Mammary epithelial cell (primary cell): ENCODE measurements at regions of chr12 and their contacts with region 1.

Region 1: GRCh38 chr12:75977952-75978671 is 53.5 kb downstream of the PHLDA1 start:
- DNase-seq: peak; percentile 99
- H3K4me3 ChIP-seq: no peak overlapping the region
- H3K27ac ChIP-seq: peak overlapping the region; percentile 96
- H3K4me1 ChIP-seq: peaks cover 37% of the 10 kb centered on the region
- H3K27me3 ChIP-seq: no peaks in the 10 kb centered on the region
- CTCF ChIP-seq: no peak

Region 2: GRCh38 chr12:75684678-75685601 is 293.2 kb before region 1 on chr12:
- CTCF ChIA-PET with region 1: interaction called, 4 read pairs
- dilution Hi-C with region 1: no loop called
- in situ Hi-C with region 1: no loop called
- intact Hi-C with region 1: loop called (anchors 1 kb)
- DNase-seq: peak; percentile 97
- H3K4me3 ChIP-seq: no peak overlapping the region
- H3K27ac ChIP-seq: peak overlapping the region; percentile 92
- H3K4me1 ChIP-seq: peaks cover 25% of the 10 kb centered on the region
- H3K27me3 ChIP-seq: no peaks in the 10 kb centered on the region
- CTCF ChIP-seq: no peak

Region 3: DNA sequence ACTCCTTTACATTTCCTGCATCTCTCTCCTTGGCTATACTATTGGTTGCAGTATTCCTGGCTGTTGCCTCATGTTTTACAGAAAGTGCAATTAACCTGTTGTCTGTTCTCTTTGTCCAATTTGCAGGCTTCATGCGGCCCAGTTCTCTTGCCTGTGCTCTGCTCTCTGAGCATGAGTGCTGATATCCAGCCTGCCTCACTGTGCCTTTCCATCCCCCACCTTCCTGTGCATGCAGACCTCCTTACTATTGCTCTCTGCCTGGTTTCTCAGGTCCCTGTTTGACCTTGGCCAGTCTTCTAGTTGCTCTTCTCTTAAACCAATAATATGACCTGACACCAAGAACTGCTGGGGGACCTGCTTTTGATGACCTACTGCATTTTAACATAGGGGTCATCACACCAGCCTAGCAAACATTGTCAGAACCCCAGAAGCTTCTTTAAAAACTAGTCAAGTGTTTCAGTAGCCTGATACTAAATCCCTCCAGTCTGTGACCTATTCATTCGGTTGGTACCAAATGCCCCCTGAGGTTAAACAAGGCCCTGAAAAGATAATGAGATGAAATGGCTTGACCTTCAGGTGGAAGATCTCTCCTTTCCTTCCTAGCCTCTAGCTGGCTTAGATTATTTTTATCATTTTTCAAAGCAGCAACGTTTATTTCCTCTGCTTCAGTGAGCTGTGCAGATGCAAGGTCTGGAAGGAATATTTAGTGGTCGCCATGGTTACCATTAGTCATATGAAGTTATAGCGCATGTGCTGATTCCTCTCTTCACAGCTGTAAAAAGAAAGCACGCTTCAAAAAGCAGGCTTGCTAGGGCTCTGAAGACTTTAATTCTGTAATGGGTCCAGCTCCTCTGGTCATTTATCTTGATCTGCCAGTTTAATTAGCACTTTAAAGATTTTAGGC is 163.0 kb before region 1 on chr12:
- CTCF ChIA-PET with region 1: no interaction called
- dilution Hi-C with region 1: no loop called
- in situ Hi-C with region 1: no loop called
- intact Hi-C with region 1: loop called (anchors 2 kb)
- DNase-seq: peak; percentile 66
- H3K4me3 ChIP-seq: no peak overlapping the region
- H3K27ac ChIP-seq: peak overlapping the region; percentile 60
- H3K4me1 ChIP-seq: peaks cover 23% of the 10 kb centered on the region
- H3K27me3 ChIP-seq: no peaks in the 10 kb centered on the region
- CTCF ChIP-seq: no peak

Region 4: GRCh38 chr12:75820848-75821578 is 157.1 kb before region 1 on chr12:
- CTCF ChIA-PET with region 1: no interaction called
- dilution Hi-C with region 1: no loop called
- in situ Hi-C with region 1: no loop called
- intact Hi-C with region 1: loop called (anchors 2 kb)
- DNase-seq: peak; percentile 79
- H3K4me3 ChIP-seq: no peak overlapping the region
- H3K27ac ChIP-seq: peak overlapping the region; percentile 44
- H3K4me1 ChIP-seq: peaks cover 52% of the 10 kb centered on the region
- H3K27me3 ChIP-seq: no peaks in the 10 kb centered on the region
- CTCF ChIP-seq: peak in 1 of 2 donors; percentile 40

Region 5: DNA sequence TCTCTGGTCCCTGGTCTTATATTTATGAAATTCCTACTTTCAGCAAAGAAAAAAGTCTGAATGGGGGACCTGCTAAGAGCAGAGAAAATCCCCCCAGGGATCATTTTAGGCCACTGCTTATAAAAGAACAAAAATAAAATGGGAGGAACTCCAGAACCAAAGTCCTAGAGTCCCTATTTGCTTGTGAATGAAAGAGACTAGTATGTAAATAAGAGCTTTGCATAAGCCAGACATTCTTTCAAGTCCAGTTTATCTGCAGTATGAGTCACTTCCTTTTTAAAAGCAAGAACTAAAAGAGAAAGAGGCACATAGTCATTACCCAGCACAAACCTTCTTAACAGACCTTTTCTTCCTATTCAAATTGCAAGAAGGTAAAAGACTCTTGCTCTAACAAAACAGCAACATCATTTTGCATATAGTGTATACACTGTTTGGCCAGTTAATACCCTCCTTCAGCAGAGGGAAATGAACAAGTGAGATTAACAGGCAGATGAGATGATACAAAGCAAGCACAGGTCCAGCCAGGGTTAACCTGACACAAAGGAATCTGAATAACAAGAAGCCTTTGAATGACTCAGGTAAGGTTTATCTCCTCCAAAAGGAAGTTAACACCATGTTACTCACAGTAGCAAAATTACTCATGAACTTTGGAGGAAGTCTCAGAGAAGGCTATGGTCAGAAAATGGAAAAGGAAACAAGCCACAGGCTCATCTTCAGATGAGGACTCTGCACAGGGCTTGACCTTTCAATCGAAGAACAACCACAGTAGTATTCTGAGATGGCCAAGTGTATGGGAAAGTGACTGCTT is 33.8 kb before region 1 on chr12:
- CTCF ChIA-PET with region 1: no interaction called
- dilution Hi-C with region 1: no loop called
- in situ Hi-C with region 1: no loop called
- intact Hi-C with region 1: loop called (anchors 1 kb)
- DNase-seq: peak; percentile 93
- H3K4me3 ChIP-seq: peak overlapping the region in 2 of 3 experiments; percentile 1 to 2
- H3K27ac ChIP-seq: peak overlapping the region; percentile 87
- H3K4me1 ChIP-seq: peaks cover 34% of the 10 kb centered on the region
- H3K27me3 ChIP-seq: no peaks in the 10 kb centered on the region
- CTCF ChIP-seq: no peak

Region 6: DNA sequence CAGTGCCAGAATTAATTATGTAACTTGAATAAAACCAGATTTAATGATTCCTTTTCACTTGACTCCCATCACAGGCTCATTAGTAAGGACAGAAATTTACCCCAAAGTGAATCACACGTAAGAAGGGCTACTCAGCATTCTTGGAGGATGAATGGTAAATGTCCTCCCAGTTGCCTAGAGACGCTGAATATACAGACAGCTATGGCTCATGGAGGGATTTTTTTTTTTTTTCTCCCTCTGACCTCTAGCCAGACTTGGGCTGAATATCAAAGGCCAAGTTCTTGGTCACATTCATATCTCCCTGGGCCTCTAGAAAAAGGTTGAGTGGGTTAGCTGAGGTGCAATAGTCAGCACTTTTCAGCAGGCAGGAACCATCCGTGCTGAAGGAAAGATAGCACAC is 24.1 kb before region 1 on chr12:
- CTCF ChIA-PET with region 1: no interaction called
- dilution Hi-C with region 1: no loop called
- in situ Hi-C with region 1: no loop called
- intact Hi-C with region 1: loop called (anchors 1 kb)
- DNase-seq: peak; percentile 95
- H3K4me3 ChIP-seq: no peak overlapping the region
- H3K27ac ChIP-seq: peak overlapping the region; percentile 94
- H3K4me1 ChIP-seq: peaks cover 22% of the 10 kb centered on the region
- H3K27me3 ChIP-seq: no peaks in the 10 kb centered on the region
- CTCF ChIP-seq: no peak

Region 7: GRCh38 chr12:75994186-75994731 is 16.1 kb after region 1 on chr12:
- CTCF ChIA-PET with region 1: no interaction called
- dilution Hi-C with region 1: no loop called
- in situ Hi-C with region 1: no loop called
- intact Hi-C with region 1: loop called (anchors 1 kb)
- DNase-seq: no peak
- H3K4me3 ChIP-seq: no peak overlapping the region
- H3K27ac ChIP-seq: peak overlapping the region; percentile 27
- H3K4me1 ChIP-seq: peaks cover 40% of the 10 kb centered on the region
- H3K27me3 ChIP-seq: no peaks in the 10 kb centered on the region
- CTCF ChIP-seq: no peak

Region 8: DNA sequence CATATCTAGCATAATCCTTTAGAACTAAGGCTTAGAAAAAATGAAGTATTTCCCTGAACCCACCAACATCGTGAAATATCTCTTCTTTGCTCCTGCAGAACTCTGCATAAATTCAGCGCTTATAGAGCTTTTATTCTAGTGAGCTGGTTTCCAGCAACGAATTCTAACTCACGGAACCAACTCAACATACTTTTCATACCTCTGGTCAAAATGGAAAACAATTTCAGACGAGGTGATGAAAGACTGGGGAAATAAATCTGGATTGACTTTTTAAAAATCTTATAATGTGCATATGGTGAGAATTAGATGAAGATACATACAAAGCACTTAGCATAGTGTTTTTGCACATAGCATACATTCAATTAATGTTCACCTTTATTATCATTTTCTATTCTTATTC is 432.7 kb after region 1 on chr12:
- CTCF ChIA-PET with region 1: no interaction called
- dilution Hi-C with region 1: no loop called
- in situ Hi-C with region 1: no loop called
- intact Hi-C with region 1: no loop called
- DNase-seq: no peak
- H3K4me3 ChIP-seq: no peak overlapping the region
- H3K27ac ChIP-seq: no peak overlapping the region
- H3K4me1 ChIP-seq: peaks cover 11% of the 10 kb centered on the region
- H3K27me3 ChIP-seq: no peaks in the 10 kb centered on the region
- CTCF ChIP-seq: no peak